ENCODE measurements at regions of chr2 and their contacts with region 1.

Region 1: GRCh38 chr2:127672341-127673224 is 2.7 kb downstream of the LIMS2 start:
- DNase-seq: no peak
- H3K4me3 ChIP-seq: no peak overlapping the region
- H3K27ac ChIP-seq: no peak overlapping the region
- H3K4me1 ChIP-seq: no peaks in the 10 kb centered on the region
- H3K27me3 ChIP-seq: peaks cover 87% of the 10 kb centered on the region
- CTCF ChIP-seq: no peak

Region 2: GRCh38 chr2:127342101-127342500 is 330.5 kb before region 1 on chr2:
- CTCF ChIA-PET with region 1: no interaction called
- POLR2A ChIA-PET with region 1: no interaction called
- intact Hi-C with region 1: no loop called
- DNase-seq: no peak
- H3K4me3 ChIP-seq: no peak overlapping the region
- H3K27ac ChIP-seq: no peak overlapping the region
- H3K4me1 ChIP-seq: no peaks in the 10 kb centered on the region
- H3K27me3 ChIP-seq: no peaks in the 10 kb centered on the region
- CTCF ChIP-seq: no peak

Region 3: DNA sequence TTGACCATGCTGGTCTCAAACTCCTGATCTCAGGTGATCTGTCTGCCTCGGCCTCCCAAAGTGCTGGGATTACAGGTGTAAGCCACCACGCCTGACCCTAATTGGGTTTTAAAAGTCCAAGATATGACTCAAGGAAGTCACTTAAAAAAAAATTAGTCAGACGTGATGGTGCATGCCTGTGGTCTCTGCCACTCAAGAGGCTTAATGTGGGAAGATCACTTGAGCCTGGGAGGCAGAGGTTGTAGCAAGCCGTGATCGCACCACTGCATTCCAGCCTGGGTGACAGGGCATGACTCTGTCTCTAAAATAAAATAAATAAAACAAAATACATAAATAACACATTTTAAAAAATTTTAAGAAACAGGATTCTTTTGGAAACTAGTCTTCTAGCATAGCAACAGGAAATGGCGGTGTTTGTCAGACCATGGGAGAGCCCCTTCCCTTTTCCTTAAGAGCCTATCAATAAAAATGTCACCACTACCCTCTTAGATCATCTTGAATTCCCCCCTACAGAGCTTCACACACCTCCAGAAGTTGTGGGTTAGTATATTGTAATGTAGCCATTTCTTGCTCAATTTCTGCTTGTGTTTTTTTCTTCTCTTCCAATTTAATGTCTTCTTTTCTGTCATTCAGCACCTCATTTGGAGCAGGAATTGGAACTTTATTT is 48.9 kb after region 1 on chr2:
- CTCF ChIA-PET with region 1: no interaction called
- POLR2A ChIA-PET with region 1: no interaction called
- intact Hi-C with region 1: loop called (anchors 1 kb)
- DNase-seq: peak; percentile 55 to 58
- H3K4me3 ChIP-seq: no peak overlapping the region
- H3K27ac ChIP-seq: peak overlapping the region; percentile 56
- H3K4me1 ChIP-seq: peaks cover 12% of the 10 kb centered on the region
- H3K27me3 ChIP-seq: no peaks in the 10 kb centered on the region
- CTCF ChIP-seq: no peak

Region 4: DNA sequence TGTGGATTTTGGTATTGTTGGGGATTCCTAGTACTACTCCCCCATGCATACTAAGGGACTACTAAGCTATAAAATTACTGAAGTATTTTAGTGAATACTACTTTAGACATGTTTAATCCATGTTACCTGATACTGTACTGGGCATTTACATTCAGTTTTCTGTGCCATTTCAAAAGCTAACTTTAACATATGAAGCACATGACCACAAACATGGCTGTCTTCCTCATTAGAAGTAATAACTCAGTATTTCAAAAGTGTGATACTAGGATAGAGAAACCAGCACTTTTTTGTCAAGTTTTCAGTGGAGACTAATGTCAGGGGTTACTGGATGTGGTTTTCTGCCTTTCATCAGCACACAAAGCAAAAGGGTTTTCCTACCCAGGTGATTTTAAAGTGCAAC is 110.5 kb after region 1 on chr2:
- CTCF ChIA-PET with region 1: no interaction called
- POLR2A ChIA-PET with region 1: no interaction called
- intact Hi-C with region 1: no loop called
- DNase-seq: no peak
- H3K4me3 ChIP-seq: no peak overlapping the region
- H3K27ac ChIP-seq: no peak overlapping the region
- H3K4me1 ChIP-seq: no peaks in the 10 kb centered on the region
- H3K27me3 ChIP-seq: no peaks in the 10 kb centered on the region
- CTCF ChIP-seq: no peak